ENCODE measurements at regions of chr13 and their contacts with region 1.

Region 1: DNA sequence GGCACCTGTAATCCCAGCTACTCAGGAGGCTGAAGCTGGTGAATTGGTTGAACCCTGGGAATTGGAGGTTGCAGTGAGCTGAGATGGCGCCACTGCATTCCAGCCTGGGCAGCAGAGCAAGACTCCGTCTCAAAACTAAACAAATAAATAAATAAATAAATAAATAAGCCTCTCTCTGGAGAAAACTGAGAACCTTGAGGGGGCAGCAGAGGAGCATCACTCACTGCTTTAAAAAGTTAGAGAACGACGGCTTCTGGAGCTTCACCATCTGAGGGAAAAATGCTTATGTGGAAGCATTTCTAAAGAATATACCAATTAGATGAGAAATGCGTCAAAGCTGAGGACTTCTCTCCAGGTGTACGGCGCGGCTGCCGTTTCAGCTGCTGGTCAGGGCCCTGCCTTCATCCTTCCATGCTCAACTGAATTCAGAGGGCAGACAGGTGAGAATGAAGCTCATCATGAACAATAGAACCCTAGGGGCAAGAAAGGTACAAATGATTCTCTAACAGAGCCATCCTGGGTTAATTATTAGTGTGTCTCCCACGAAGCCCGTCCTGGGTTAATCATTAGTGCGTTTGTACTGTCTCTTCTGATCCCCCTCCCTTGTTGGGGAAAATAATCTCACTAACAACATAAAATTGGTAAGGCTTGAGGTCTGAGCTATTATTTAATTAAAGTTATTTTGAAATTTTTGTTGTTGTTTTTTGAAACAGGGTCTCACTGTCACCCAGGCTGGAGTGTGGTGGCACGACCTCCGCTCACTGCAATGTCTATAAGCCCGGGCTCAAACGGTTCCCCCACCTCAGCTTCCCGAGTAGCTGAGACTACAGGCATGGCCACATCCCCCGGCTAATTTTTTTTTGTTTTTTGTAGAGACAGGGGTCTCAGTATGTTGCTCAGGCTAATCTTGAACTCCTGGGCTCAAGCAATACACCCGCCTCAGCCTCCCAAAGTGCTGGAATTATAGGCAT is 80.1 kb downstream of the IPO5 start:
- DNase-seq: peak; percentile 57 to 61
- H3K4me3 ChIP-seq: 0 out of 2 replicates have a peak overlapping the region, but pooled peaks have one; percentile 6
- H3K4me3 Mint-ChIP-seq: peak overlapping the region; percentile 56
- H3K27ac Mint-ChIP-seq: no peak overlapping the region
- H3K4me1 ChIP-seq: peaks cover 9% of the 10 kb centered on the region
- H3K4me1 Mint-ChIP-seq: no peaks in the 10 kb centered on the region
- H3K27me3 ChIP-seq: no peaks in the 10 kb centered on the region
- H3K27me3 Mint-ChIP-seq: no peaks in the 10 kb centered on the region
- CTCF ChIP-seq: peak; percentile 42 to 57

Region 2: DNA sequence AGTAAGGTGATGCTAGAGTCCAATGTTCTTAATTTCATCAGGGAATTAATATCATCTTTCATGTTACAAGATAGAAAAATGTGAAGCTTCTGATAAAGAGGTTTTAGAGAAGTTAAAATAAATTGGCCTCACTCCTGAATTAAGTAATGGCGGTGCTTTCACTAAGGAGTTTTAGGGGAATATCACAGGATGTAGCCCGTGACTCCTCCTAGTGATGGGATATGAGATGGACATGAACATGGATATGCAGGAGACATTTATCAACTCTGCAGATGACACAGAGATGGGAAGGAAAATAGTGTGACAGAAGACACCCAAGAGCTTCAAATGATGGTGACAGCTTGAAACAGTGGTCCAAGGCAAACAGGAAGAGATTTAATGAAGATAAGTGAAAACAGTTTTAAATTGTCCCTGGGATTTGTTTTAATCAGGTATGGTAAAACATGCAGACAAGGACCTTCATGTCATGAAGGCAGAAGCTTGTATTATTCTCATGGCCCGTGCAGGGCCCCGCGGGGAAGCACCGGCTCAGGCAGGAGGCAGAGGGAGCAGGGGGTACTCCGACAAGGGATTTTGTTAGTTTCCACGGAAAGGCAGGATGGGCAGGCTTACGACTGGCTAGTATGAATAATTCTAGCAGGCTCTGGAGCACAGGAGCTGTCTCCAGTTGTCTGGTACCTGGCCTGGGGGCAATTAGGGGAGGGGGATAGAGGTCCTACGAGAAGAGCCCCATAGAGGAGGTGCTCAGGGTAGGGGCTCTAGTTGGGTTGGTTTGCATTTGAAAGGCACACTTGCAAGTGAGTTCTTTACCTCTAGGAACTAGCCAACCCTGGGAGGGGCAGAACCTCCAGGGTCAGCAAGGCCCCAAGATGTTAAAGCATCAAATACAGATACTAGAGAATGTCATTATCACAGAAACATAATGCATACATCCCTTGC is 70.6 kb after region 1 on chr13:
- CTCF ChIA-PET with region 1: no interaction called
- POLR2A ChIA-PET with region 1: no interaction called
- intact Hi-C with region 1: loop called (anchors 1 kb)
- DNase-seq: peak; percentile 23 to 36
- H3K4me3 ChIP-seq: no peak overlapping the region
- H3K4me3 Mint-ChIP-seq: no peak overlapping the region
- H3K27ac Mint-ChIP-seq: no peak overlapping the region
- H3K4me1 ChIP-seq: no peaks in the 10 kb centered on the region
- H3K4me1 Mint-ChIP-seq: no peaks in the 10 kb centered on the region
- H3K27me3 ChIP-seq: no peaks in the 10 kb centered on the region
- H3K27me3 Mint-ChIP-seq: no peaks in the 10 kb centered on the region
- CTCF ChIP-seq: peak; percentile 45 to 57

Region 3: DNA sequence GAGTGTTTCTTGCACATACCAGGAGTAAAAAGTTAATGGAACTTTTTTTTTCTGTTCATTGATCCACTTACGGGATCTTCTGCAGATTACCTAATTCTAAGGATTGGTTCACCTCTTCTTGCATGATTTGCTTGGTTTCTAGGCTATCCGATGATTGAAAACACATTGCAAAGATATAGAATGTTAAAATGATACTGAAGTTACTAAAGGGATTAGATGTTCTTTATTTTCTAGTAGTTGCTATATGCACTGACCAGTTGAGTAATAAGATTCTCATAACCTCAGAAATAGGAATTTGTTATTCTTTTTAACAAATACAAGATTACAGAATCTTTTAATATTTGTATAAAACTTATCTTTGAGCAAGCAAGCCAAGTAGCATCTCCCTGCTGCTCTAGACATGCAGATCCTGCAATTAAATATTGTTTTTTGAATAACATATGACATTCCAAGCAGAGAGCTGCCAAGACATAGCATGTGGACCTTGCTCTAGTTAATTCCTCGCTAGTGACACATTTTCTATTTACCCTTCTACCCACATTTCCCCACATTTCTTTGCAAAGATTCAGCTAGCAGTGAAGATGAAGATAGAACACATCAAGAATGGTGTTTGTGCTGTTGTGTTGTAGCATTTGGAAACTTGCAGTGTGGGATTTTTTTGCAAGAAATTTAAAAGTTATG is 195.2 kb after region 1 on chr13:
- CTCF ChIA-PET with region 1: no interaction called
- POLR2A ChIA-PET with region 1: no interaction called
- intact Hi-C with region 1: no loop called
- DNase-seq: no peak
- H3K4me3 ChIP-seq: no peak overlapping the region
- H3K4me3 Mint-ChIP-seq: no peak overlapping the region
- H3K27ac Mint-ChIP-seq: no peak overlapping the region
- H3K4me1 ChIP-seq: peaks cover 5% of the 10 kb centered on the region
- H3K4me1 Mint-ChIP-seq: no peaks in the 10 kb centered on the region
- H3K27me3 ChIP-seq: no peaks in the 10 kb centered on the region
- H3K27me3 Mint-ChIP-seq: no peaks in the 10 kb centered on the region
- CTCF ChIP-seq: no peak

Region 4: GRCh38 chr13:98445340-98446233 is 412.0 kb after region 1 on chr13:
- CTCF ChIA-PET with region 1: interaction called, 4 read pairs
- POLR2A ChIA-PET with region 1: no interaction called
- intact Hi-C with region 1: loop called (anchors 5 kb)
- DNase-seq: peak; percentile 77 to 88
- H3K4me3 ChIP-seq: no peak overlapping the region
- H3K4me3 Mint-ChIP-seq: no peak overlapping the region
- H3K27ac Mint-ChIP-seq: peak overlapping the region; percentile 77
- H3K4me1 ChIP-seq: no peaks in the 10 kb centered on the region
- H3K4me1 Mint-ChIP-seq: peaks cover 14% of the 10 kb centered on the region
- H3K27me3 ChIP-seq: no peaks in the 10 kb centered on the region
- H3K27me3 Mint-ChIP-seq: no peaks in the 10 kb centered on the region
- CTCF ChIP-seq: peak; percentile 97 to 99

Region 5: GRCh38 chr13:98664039-98664438 is 630.5 kb after region 1 on chr13:
- CTCF ChIA-PET with region 1: no interaction called
- POLR2A ChIA-PET with region 1: no interaction called
- intact Hi-C with region 1: loop called (anchors 2 kb)
- DNase-seq: no peak
- H3K4me3 ChIP-seq: no peak overlapping the region
- H3K4me3 Mint-ChIP-seq: peak overlapping the region; percentile 38
- H3K27ac Mint-ChIP-seq: peak overlapping the region; percentile 54
- H3K4me1 ChIP-seq: peaks cover 45% of the 10 kb centered on the region
- H3K4me1 Mint-ChIP-seq: peaks cover 46% of the 10 kb centered on the region
- H3K27me3 ChIP-seq: no peaks in the 10 kb centered on the region
- H3K27me3 Mint-ChIP-seq: no peaks in the 10 kb centered on the region
- CTCF ChIP-seq: no peak

Region 6: DNA sequence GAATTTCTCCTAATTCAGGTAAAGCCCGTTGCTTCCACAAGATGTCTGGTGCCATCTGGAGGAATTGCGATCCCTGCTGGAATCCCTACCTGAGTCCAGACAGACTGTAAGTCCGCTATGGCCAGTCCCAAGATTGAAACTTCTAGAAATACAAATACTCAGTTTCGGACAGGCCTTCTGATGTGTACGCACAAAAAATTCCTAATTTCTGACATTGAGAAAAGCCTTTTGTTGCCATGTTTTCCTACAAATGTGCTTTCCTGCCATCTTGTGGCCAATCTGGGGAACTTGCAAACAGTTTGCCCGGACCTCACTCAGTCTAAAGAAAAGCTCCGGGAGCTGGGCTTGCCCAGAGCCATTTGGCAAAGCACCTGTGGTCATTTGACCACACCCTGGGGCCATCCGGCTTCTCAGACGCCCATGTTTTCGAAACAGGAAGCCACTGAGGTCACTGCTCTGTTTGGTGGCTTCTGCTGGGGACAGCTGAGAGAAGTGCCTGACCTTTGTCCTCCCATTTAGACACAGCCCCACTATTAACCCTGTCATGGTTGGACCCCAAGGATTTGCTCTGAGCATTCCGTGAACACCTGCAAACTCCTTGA is 639.5 kb after region 1 on chr13:
- CTCF ChIA-PET with region 1: no interaction called
- POLR2A ChIA-PET with region 1: no interaction called
- intact Hi-C with region 1: loop called (anchors 2 kb)
- DNase-seq: peak; percentile 87 to 91
- H3K4me3 ChIP-seq: no peak overlapping the region
- H3K4me3 Mint-ChIP-seq: peak overlapping the region; percentile 14
- H3K27ac Mint-ChIP-seq: peak overlapping the region; percentile 23
- H3K4me1 ChIP-seq: peaks cover 17% of the 10 kb centered on the region
- H3K4me1 Mint-ChIP-seq: peaks cover 8% of the 10 kb centered on the region
- H3K27me3 ChIP-seq: no peaks in the 10 kb centered on the region
- H3K27me3 Mint-ChIP-seq: no peaks in the 10 kb centered on the region
- CTCF ChIP-seq: peak; percentile 88

Measured in Caco-2 (cell line).